Activated B cell treated with CpG ODN at 0.5 μM for 24 hours (primary cell): ENCODE measurements at regions of chr22 and their contacts with region 1.

Region 1: GRCh38 chr22:41697126-41697775 is 2.1 kb upstream of the MEI1 start:
- DNase-seq: peak; percentile 91
- ATAC-seq: peak; percentile 83
- H3K4me3 Mint-ChIP-seq: peak overlapping the region; percentile 63
- H3K27ac Mint-ChIP-seq: peak overlapping the region; percentile 72
- H3K4me1 Mint-ChIP-seq: peaks cover 12% of the 10 kb centered on the region
- H3K27me3 Mint-ChIP-seq: no peaks in the 10 kb centered on the region
- CTCF ChIP-seq: peak; percentile 51

Region 2: GRCh38 chr22:41442240-41442792 is 254.9 kb before region 1 on chr22:
- CTCF ChIA-PET with region 1: no interaction called
- POLR2A ChIA-PET with region 1: no interaction called
- intact Hi-C with region 1: no loop called
- DNase-seq: no peak
- ATAC-seq: no peak
- H3K4me3 Mint-ChIP-seq: no peak overlapping the region
- H3K27ac Mint-ChIP-seq: peak overlapping the region; percentile 14
- H3K4me1 Mint-ChIP-seq: peaks cover 37% of the 10 kb centered on the region
- H3K27me3 Mint-ChIP-seq: no peaks in the 10 kb centered on the region
- CTCF ChIP-seq: no peak

Region 3: DNA sequence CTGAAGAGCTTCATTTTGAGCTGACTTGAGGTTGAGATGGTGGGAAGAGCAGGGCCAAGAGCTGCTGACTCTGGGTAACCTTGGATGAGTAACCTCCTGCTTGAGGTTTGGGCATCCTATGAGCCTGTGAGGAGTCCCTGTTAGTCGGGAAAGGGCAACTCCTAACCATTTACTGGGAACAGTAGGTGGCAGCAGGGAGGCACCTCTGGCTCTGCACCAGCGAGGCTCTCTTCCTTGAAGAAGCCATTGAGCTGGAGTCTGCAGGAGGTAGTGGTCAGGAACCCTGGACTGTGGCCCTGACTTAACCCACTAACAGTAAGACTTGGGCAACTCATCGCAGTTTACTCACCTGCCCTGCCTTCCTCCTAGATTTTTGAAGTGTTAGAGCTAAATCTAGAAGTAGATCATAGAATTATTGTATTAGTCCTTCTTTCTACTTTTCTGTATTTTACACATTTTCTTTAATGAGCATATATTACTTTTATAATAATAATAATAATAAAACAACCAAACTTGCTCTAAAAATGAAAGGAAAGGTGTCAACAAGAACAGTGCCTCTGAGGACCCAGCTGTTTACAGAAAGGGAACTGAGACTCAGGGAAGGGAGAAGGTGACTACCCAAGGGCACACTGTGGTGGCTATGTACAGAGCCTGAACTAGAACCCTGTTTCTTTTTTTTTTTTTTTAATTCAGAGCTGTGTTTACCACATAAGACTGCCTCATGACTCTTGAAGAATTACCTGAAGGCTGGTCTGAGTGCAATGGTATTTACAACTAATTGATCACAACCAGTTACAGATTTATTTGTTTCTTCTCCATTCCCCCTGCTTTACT is 49.5 kb after region 1 on chr22:
- CTCF ChIA-PET with region 1: interaction called, 14 read pairs
- POLR2A ChIA-PET with region 1: interaction called, 5 read pairs
- intact Hi-C with region 1: no loop called
- DNase-seq: peak; percentile 18
- ATAC-seq: peak; percentile 96
- H3K4me3 Mint-ChIP-seq: peak overlapping the region; percentile 38
- H3K27ac Mint-ChIP-seq: peak overlapping the region; percentile 69
- H3K4me1 Mint-ChIP-seq: peaks cover 31% of the 10 kb centered on the region
- H3K27me3 Mint-ChIP-seq: no peaks in the 10 kb centered on the region
- CTCF ChIP-seq: no peak

Region 4: GRCh38 chr22:41800348-41801146 is 103.3 kb after region 1 on chr22 and contains the start of gene CCDC134:
- CTCF ChIA-PET with region 1: interaction called, 32 read pairs
- POLR2A ChIA-PET with region 1: interaction called, 42 read pairs
- intact Hi-C with region 1: loop called (anchors 1 kb)
- DNase-seq: peak; percentile 88
- ATAC-seq: peak; percentile 98
- H3K4me3 Mint-ChIP-seq: peak within 1 kb of the TSS; percentile 98
- H3K27ac Mint-ChIP-seq: peak within 1 kb of the TSS; percentile 97
- H3K4me1 Mint-ChIP-seq: peaks cover 34% of the 10 kb centered on the region
- H3K27me3 Mint-ChIP-seq: no peaks in the 10 kb centered on the region
- CTCF ChIP-seq: no peak
- total RNA-seq, gene CCDC134: 9.2 and 13.2 TPM in 2 replicates

Region 5: GRCh38 chr22:41899992-41900651 is 202.9 kb after region 1 on chr22:
- CTCF ChIA-PET with region 1: no interaction called
- POLR2A ChIA-PET with region 1: no interaction called
- intact Hi-C with region 1: no loop called
- DNase-seq: no peak
- ATAC-seq: no peak
- H3K4me3 Mint-ChIP-seq: no peak overlapping the region
- H3K27ac Mint-ChIP-seq: no peak overlapping the region
- H3K4me1 Mint-ChIP-seq: no peaks in the 10 kb centered on the region
- H3K27me3 Mint-ChIP-seq: no peaks in the 10 kb centered on the region
- CTCF ChIP-seq: no peak

Region 6: DNA sequence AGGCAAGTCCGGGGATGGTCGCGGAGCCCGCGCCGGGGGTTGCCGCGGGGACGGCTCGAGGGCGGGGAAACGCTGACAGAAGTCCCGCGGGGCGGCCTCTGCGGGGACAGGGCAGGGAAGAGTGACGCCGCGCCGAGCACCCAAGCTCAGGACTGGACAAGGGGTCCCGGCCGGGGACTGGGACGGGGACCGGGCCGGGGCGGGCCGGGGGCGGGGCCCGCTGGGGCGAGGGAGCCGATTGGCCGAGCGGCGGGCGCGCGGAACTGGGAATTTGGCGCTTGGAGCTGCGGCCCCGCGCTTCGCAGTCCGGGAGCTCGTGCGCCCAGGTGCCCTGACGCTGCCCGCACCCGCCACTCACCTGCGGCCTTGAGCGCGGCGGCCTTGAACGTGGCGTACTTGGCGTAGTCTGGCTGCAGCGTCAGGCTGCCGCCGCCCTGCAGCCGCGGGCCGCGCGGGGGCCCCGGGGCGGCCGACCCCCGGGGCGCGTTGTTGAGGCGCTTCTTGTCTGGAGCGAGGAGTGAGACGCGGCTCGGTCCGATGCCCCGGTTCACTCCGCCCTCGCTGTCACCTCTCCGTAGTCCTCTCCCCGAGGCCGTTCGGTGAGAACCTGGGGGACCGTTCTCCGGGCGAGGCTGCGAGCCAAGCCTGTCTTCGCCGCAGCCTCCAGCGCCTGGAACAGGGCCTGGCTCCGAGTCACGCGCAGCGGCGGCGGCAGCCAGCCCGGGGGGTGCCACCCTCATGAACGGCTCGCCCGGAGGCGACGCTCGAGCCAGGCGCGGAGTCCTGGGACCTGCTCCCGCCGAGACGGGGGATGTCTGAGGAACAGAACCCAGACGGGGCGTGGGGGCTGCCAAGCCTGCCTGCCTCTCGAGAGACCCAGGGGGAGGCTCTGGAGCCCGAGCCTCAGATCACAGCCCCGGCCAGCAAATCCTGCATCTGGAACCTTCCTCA is 213.1 kb after region 1 on chr22:
- CTCF ChIA-PET with region 1: no interaction called
- POLR2A ChIA-PET with region 1: interaction called, 10 read pairs
- intact Hi-C with region 1: no loop called
- DNase-seq: peak; percentile 57
- ATAC-seq: peak; percentile 15
- H3K4me3 Mint-ChIP-seq: peak overlapping the region; percentile 68
- H3K27ac Mint-ChIP-seq: no peak overlapping the region
- H3K4me1 Mint-ChIP-seq: peaks cover 48% of the 10 kb centered on the region
- H3K27me3 Mint-ChIP-seq: peaks cover 10% of the 10 kb centered on the region
- CTCF ChIP-seq: no peak

Region 7: GRCh38 chr22:41951898-41952474 is 254.7 kb after region 1 on chr22 and contains the start of gene SMIM45:
- CTCF ChIA-PET with region 1: interaction called, 11 read pairs
- POLR2A ChIA-PET with region 1: interaction called, 9 read pairs
- intact Hi-C with region 1: loop called (anchors 1 kb)
- DNase-seq: peak; percentile 57
- ATAC-seq: peak; percentile 87
- H3K4me3 Mint-ChIP-seq: peak within 1 kb of the TSS; percentile 35
- H3K27ac Mint-ChIP-seq: no peak within 1 kb of the TSS
- H3K4me1 Mint-ChIP-seq: peaks cover 60% of the 10 kb centered on the region
- H3K27me3 Mint-ChIP-seq: no peaks in the 10 kb centered on the region
- CTCF ChIP-seq: no peak

Region 8: GRCh38 chr22:42437488-42438292 is 740.4 kb after region 1 on chr22:
- CTCF ChIA-PET with region 1: no interaction called
- POLR2A ChIA-PET with region 1: no interaction called
- intact Hi-C with region 1: loop called (anchors 5 kb)
- DNase-seq: peak; percentile 76
- ATAC-seq: peak; percentile 88
- H3K4me3 Mint-ChIP-seq: peak overlapping the region; percentile 81
- H3K27ac Mint-ChIP-seq: peak overlapping the region; percentile 46
- H3K4me1 Mint-ChIP-seq: peaks cover 37% of the 10 kb centered on the region
- H3K27me3 Mint-ChIP-seq: peaks cover 25% of the 10 kb centered on the region
- CTCF ChIP-seq: peak; percentile 59